ENCODE measurements at regions of chrX and their contacts with region 1.

Region 1: GRCh38 chrX:30275498-30275897 is 28.6 kb downstream of the MAGEB1 start:
- DNase-seq: peak; percentile 15
- ATAC-seq: peak; percentile 38; the same call in 1 of the 2 replicates
- H3K4me3 ChIP-seq: no peak overlapping the region
- H3K27ac ChIP-seq: no peak overlapping the region
- H3K4me1 ChIP-seq: no peaks in the 10 kb centered on the region; a peak in 1 of 4 replicates
- H3K27me3 ChIP-seq: no peaks in the 10 kb centered on the region
- CTCF ChIP-seq: peak in 2 of 3 experiments; percentile 47 to 61; a peak in 4 of 6 replicates
- POLR2A ChIP-seq: no peak
- RAD21 ChIP-seq: peak; percentile 75

Region 2: GRCh38 chrX:30141966-30142365 is 133.5 kb before region 1 on chrX:
- CTCF ChIA-PET with region 1: no interaction called
- POLR2A ChIA-PET with region 1: no interaction called
- RAD21 ChIA-PET with region 1: no interaction called
- intact Hi-C with region 1: loop called (anchors 5 kb)
- DNase-seq: peak; percentile 43
- ATAC-seq: peak; percentile 77
- H3K4me3 ChIP-seq: no peak overlapping the region
- H3K27ac ChIP-seq: no peak overlapping the region
- H3K4me1 ChIP-seq: no peaks in the 10 kb centered on the region
- H3K27me3 ChIP-seq: no peaks in the 10 kb centered on the region
- CTCF ChIP-seq: peak; percentile 36 to 43 (median 39); a peak in 5 of 6 replicates
- POLR2A ChIP-seq: no peak
- RAD21 ChIP-seq: peak; percentile 63

Region 3: GRCh38 chrX:30488092-30488491 is 212.6 kb after region 1 on chrX:
- CTCF ChIA-PET with region 1: interaction called, 8 read pairs
- POLR2A ChIA-PET with region 1: no interaction called
- RAD21 ChIA-PET with region 1: no interaction called
- intact Hi-C with region 1: loop called (anchors 1 kb)
- DNase-seq: peak; percentile 4
- ATAC-seq: peak; percentile 54; the same call in 1 of the 2 replicates
- H3K4me3 ChIP-seq: no peak overlapping the region
- H3K27ac ChIP-seq: no peak overlapping the region
- H3K4me1 ChIP-seq: no peaks in the 10 kb centered on the region
- H3K27me3 ChIP-seq: no peaks in the 10 kb centered on the region
- CTCF ChIP-seq: peak; percentile 16 to 39 (median 27); a peak in 3 of 6 replicates
- POLR2A ChIP-seq: no peak
- RAD21 ChIP-seq: peak; percentile 52

Region 4: DNA sequence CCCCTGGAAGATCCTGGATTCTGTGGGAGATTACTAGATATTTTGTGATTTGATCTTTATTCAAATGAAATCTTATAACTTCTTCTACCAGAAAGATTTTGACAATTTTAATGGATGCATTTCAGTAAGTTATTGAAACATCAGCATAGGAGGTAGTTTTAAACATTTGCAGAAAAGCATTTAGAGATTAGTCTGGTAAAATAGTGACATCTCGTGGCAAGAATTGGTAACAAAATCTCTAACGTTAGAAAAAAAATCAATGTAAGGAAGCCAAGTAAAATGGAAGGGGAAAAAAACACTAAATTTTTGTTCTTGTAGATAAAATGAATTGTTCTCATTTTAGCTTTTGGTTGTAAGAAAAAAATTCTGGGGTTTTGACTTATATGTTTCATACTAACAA is 228.8 kb after region 1 on chrX:
- CTCF ChIA-PET with region 1: interaction called, 3 read pairs
- POLR2A ChIA-PET with region 1: no interaction called
- RAD21 ChIA-PET with region 1: no interaction called
- intact Hi-C with region 1: loop called (anchors 1 kb)
- DNase-seq: peak; percentile 16
- ATAC-seq: no peak
- H3K4me3 ChIP-seq: no peak overlapping the region
- H3K27ac ChIP-seq: no peak overlapping the region
- H3K4me1 ChIP-seq: no peaks in the 10 kb centered on the region
- H3K27me3 ChIP-seq: no peaks in the 10 kb centered on the region
- CTCF ChIP-seq: peak in 2 of 3 experiments; percentile 37 to 48; a peak in 3 of 6 replicates
- POLR2A ChIP-seq: no peak
- RAD21 ChIP-seq: peak; percentile 63

Region 5: DNA sequence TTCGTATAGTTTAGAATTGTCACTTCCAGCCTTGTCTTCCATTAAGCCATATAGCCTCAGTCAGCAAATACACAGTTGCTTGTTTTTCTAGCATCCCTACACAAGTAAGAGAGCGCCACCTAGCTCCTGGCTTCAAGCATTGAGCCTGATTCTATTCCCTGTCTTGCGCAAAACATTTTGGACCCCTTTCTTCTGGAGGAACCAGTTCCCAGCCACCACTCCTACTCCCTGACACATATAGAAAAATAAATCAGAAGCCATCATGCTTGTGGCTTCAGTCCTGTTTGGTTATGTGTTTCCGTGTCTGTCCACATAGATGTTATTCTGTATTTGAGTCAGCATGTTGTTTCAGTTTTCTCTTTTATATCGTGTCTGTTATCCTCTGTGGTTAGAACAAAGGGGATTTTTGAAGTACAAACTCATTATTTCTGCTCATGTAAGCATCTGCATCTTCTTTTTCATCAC is 437.6 kb after region 1 on chrX:
- CTCF ChIA-PET with region 1: no interaction called
- POLR2A ChIA-PET with region 1: no interaction called
- RAD21 ChIA-PET with region 1: no interaction called
- intact Hi-C with region 1: loop called (anchors 5 kb)
- DNase-seq: peak; percentile 21
- ATAC-seq: peak; percentile 76
- H3K4me3 ChIP-seq: no peak overlapping the region
- H3K27ac ChIP-seq: no peak overlapping the region
- H3K4me1 ChIP-seq: no peaks in the 10 kb centered on the region
- H3K27me3 ChIP-seq: no peaks in the 10 kb centered on the region
- CTCF ChIP-seq: peak; percentile 58 to 67 (median 64); a peak in 5 of 6 replicates
- POLR2A ChIP-seq: no peak
- RAD21 ChIP-seq: peak; percentile 66

Region 6: GRCh38 chrX:30795981-30796958 is 520.8 kb after region 1 on chrX:
- CTCF ChIA-PET with region 1: no interaction called
- POLR2A ChIA-PET with region 1: no interaction called
- RAD21 ChIA-PET with region 1: no interaction called
- intact Hi-C with region 1: no loop called
- DNase-seq: no peak
- ATAC-seq: no peak
- H3K4me3 ChIP-seq: no peak overlapping the region
- H3K27ac ChIP-seq: no peak overlapping the region
- H3K4me1 ChIP-seq: no peaks in the 10 kb centered on the region
- H3K27me3 ChIP-seq: no peaks in the 10 kb centered on the region
- CTCF ChIP-seq: no peak
- POLR2A ChIP-seq: no peak
- RAD21 ChIP-seq: no peak

Measured in HCT116 (cell line).